ENCODE measurements at regions of chr12 and their contacts with region 1.

Region 1: GRCh38 chr12:30806989-30807694 is 52.4 kb upstream of the CAPRIN2 start:
- DNase-seq: peak in 1 of 2 donors; percentile 78
- ATAC-seq: peak in 2 of 3 donors; percentile 77 to 81
- H3K4me3 ChIP-seq: no peak overlapping the region
- H3K4me3 Mint-ChIP-seq: no peak overlapping the region
- H3K27ac ChIP-seq: no peak overlapping the region
- H3K27ac Mint-ChIP-seq: no peak overlapping the region
- H3K4me1 ChIP-seq: peaks cover 2% of the 10 kb centered on the region
- H3K4me1 Mint-ChIP-seq: no peaks in the 10 kb centered on the region
- H3K27me3 ChIP-seq: no peaks in the 10 kb centered on the region
- H3K27me3 Mint-ChIP-seq: peaks cover 8 to 9% of the 10 kb centered on the region in 2 donors
- CTCF ChIP-seq: peak; percentile 81

Region 2: GRCh38 chr12:29519585-29520182 is 1287.5 kb before region 1 on chr12:
- intact Hi-C with region 1: loop called (anchors 1 kb)
- DNase-seq: peak in 1 of 2 donors; percentile 63
- ATAC-seq: no peak
- H3K4me3 ChIP-seq: no peak overlapping the region
- H3K4me3 Mint-ChIP-seq: no peak overlapping the region
- H3K27ac ChIP-seq: no peak overlapping the region
- H3K27ac Mint-ChIP-seq: no peak overlapping the region
- H3K4me1 ChIP-seq: no peaks in the 10 kb centered on the region
- H3K4me1 Mint-ChIP-seq: no peaks in the 10 kb centered on the region
- H3K27me3 ChIP-seq: no peaks in the 10 kb centered on the region
- H3K27me3 Mint-ChIP-seq: peaks cover 4 to 25% of the 10 kb centered on the region in 2 donors
- CTCF ChIP-seq: peak; percentile 46

Region 3: DNA sequence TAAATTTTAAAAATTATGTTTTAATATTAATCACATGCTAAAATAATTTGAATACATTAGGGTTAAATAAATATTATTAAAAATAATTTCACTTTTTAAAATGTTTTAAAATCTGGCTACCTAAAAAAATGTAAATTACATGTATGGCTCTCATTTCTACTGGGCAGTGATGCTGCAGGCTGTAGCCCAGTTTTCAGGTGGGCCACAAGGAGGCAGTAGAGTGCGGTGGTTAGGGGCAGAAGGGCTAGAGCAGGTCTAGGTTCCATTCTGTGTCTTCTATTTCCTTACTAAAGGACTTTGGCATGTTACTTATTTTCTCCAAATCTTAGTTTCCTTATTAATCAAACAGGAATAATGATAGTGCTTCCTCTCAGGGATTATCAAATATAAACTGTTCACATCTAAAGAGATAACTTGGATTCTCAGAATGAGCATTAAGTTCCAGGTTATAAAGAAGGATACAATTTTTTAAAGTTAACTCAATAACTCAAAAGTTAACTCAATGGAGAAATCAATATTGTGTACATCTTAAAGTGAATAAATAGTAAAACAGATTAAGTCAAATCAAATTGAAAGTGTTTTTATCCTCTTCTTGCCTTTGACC is 1254.7 kb before region 1 on chr12:
- intact Hi-C with region 1: loop called (anchors 1 kb)
- DNase-seq: peak; percentile 37 to 72
- ATAC-seq: peak; percentile 72 to 88 (median 73)
- H3K4me3 ChIP-seq: no peak overlapping the region
- H3K4me3 Mint-ChIP-seq: no peak overlapping the region
- H3K27ac ChIP-seq: no peak overlapping the region
- H3K27ac Mint-ChIP-seq: no peak overlapping the region
- H3K4me1 ChIP-seq: no peaks in the 10 kb centered on the region
- H3K4me1 Mint-ChIP-seq: no peaks in the 10 kb centered on the region
- H3K27me3 ChIP-seq: no peaks in the 10 kb centered on the region
- H3K27me3 Mint-ChIP-seq: peaks cover 0 to 12% of the 10 kb centered on the region in 2 donors
- CTCF ChIP-seq: peak; percentile 71

Region 4: DNA sequence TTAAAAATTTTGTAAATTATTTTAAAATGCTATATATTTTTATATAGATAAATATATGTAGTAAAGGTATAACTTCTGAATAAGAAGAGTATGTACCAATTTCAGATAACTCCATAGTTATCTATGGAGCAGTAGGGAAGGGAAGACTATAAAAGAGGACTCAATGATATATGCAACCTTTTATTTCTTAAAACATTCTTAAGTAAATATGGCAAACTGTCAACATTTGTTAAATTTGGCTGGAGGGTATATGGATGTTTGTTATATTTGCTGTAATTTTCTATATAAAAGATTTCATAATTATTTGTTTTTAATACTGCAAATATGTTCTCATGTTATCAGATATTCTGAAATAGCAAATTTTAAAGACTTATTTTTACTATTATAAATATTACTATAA is 81.1 kb after region 1 on chr12:
- intact Hi-C with region 1: no loop called
- DNase-seq: no peak
- ATAC-seq: no peak
- H3K4me3 ChIP-seq: no peak overlapping the region
- H3K4me3 Mint-ChIP-seq: no peak overlapping the region
- H3K27ac ChIP-seq: no peak overlapping the region
- H3K27ac Mint-ChIP-seq: no peak overlapping the region
- H3K4me1 ChIP-seq: no peaks in the 10 kb centered on the region
- H3K4me1 Mint-ChIP-seq: no peaks in the 10 kb centered on the region
- H3K27me3 ChIP-seq: no peaks in the 10 kb centered on the region
- H3K27me3 Mint-ChIP-seq: peaks cover 0 to 5% of the 10 kb centered on the region in 2 donors
- CTCF ChIP-seq: no peak

Region 5: DNA sequence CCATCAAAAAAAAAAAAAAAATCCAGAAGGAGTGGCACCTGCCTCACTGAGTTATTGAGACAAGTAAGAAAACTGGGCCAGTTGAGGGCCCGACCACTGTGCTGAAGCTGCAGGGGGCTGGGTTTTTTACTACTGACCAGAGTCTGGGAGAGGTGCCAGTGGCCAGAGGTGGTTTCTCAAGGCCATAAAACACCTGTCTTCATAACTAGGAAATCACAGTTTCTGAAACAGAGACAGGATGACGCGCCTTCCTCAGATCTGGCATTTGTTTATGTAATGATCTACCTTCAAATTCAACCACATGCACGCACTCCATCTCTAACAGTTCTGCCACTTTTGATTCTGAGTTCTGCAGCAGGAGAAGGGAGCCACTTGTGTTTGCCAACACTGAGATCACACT is 132.1 kb after region 1 on chr12:
- intact Hi-C with region 1: no loop called
- DNase-seq: no peak
- ATAC-seq: no peak
- H3K4me3 ChIP-seq: no peak overlapping the region
- H3K4me3 Mint-ChIP-seq: no peak overlapping the region
- H3K27ac ChIP-seq: no peak overlapping the region
- H3K27ac Mint-ChIP-seq: no peak overlapping the region
- H3K4me1 ChIP-seq: no peaks in the 10 kb centered on the region
- H3K4me1 Mint-ChIP-seq: no peaks in the 10 kb centered on the region
- H3K27me3 ChIP-seq: no peaks in the 10 kb centered on the region
- H3K27me3 Mint-ChIP-seq: peaks cover 9 to 11% of the 10 kb centered on the region in 2 donors
- CTCF ChIP-seq: no peak

Measured in natural killer cell (primary cell).